ENCODE measurements at regions of chr19 and their contacts with region 1.

Region 1: DNA sequence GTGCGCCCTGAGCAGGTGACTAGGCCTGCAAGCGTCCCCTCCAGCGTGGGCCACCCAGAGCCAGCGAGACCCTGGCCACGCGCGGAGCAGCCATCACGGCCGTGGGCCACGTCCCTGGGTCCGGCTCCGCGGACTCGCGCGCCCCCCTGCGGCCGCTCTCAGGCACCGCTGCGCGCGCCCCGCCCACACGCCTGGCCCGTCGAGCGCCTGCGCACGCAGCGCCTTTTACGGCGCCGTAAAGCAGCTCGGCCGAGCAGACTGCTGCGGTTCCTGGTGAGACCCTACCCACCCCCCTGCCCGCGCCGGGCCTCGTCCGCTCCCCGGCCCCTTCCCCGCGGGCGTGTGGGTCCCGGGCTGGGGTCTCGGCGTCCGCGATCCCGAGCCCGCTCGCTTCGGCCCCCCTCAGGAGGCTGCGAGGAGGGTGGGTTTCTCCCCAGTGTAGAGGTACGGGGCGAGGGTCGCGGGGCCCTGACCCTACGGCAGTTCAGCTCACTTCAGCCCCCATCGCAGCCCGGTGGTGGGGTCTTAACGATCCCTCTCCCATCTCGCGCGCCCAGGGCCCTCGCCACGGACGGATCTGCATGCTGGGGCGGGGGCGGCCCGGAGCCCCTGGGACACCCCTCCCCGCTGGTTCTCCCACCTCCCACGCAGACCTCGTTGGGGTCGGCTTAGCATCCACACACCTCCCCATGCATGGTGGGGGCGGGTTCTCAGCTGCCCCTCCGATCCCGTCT is at the start of gene TRAPPC5:
- DNase-seq: no peak
- H3K4me3 ChIP-seq: peak within 1 kb of the TSS; percentile 100
- H3K27me3 ChIP-seq: no peaks in the 10 kb centered on the region; the same call in 1 of the 2 replicates
- CTCF ChIP-seq: peak; percentile 37; the same call in 1 of the 2 replicates
- polyA plus RNA-seq, gene TRAPPC5: 59.7 and 85.1 TPM in 2 replicates

Region 2: DNA sequence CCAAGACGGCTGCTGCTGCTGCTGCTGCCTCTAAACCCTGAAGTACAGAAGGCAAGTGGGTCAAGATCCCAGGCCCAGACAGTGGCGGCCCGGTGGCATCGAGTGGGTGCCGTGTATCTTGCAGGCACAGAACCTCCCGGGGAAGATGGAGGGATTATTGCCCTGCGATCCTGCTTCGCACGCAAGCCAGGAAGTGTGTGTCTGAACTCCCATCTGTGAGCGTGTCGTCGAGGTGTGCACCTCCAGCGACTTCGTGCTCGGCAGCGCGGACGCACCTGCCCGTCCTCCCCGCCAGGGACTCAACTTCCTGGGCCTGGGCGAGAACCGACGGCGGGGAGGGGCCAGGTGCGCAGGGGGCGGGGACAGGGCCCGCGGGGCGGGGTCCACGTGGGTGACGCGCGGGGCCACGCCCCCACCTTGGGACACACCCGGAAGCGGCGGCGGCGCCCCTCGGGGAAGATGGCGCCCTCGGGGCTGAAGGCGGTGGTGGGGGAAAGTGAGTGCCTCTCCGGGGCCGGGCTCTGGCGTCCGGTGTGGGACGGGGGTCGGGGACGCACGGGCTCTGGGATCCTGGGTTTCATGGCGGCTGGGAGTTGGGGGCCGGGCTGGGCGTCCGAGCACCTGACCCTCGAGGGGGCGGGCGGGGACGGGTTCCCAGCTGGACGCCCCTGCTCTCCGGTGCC is 43.9 kb before region 1 on chr19 and contains the start of gene STXBP2:
- CTCF ChIA-PET with region 1: interaction called, 18 read pairs
- POLR2A ChIA-PET with region 1: no interaction called
- DNase-seq: no peak
- H3K4me3 ChIP-seq: peak within 1 kb of the TSS; percentile 57
- H3K27me3 ChIP-seq: no peaks in the 10 kb centered on the region
- CTCF ChIP-seq: no peak
- polyA plus RNA-seq, gene STXBP2: 28.6 and 39.4 TPM in 2 replicates

Region 3: DNA sequence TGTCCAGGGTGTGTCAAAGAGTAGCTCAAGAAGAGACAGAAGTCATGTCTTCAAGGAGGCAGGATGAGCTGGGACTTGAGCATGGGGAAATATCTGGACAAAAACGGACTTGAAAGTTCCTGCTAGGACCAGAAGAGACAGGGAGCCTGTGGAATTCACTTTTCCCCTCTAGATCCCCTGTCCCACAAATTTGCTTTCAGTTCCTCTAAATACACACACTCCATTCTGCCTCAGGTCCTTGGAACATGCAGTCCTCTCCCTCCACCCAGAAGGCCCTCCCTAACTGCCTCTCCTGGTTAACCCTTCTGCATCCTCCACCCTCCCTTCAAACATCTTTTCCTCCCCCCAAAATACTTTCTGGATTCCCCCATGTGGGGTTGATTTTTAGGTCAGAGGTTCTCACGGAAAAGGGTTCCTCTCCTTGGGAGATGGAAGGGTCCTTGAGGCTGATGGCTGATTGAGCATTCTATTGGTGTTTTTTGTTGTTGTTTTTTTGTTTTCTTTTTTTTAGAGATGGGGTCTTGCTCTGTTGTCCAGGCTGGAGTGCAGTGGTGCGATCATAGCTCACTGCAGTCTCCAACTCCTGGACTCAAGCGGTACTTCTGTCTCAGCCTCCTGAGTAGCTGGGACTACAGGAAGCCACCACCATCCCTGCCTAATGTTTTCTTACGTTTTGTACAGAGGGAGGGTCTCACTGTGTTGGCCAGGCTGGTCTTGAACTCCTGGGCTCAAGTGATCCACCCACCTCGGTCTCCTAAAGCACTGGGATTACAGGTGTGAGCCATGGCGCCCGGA is 18.8 kb before region 1 on chr19:
- CTCF ChIA-PET with region 1: interaction called, 91 read pairs
- POLR2A ChIA-PET with region 1: no interaction called
- DNase-seq: no peak
- H3K4me3 ChIP-seq: no peak overlapping the region
- H3K27me3 ChIP-seq: no peaks in the 10 kb centered on the region; the same call in 1 of the 2 replicates
- CTCF ChIP-seq: no peak

Region 4: GRCh38 chr19:7699417-7700401 is 18.9 kb after region 1 on chr19:
- CTCF ChIA-PET with region 1: interaction called, 20 read pairs
- POLR2A ChIA-PET with region 1: no interaction called
- DNase-seq: no peak
- H3K4me3 ChIP-seq: no peak overlapping the region
- H3K27me3 ChIP-seq: no peaks in the 10 kb centered on the region; the same call in 1 of the 2 replicates
- CTCF ChIP-seq: no peak

Measured in BJ (cell line).